A549 (cell line): ENCODE measurements at regions of chr17 and their contacts with region 1.

Region 1: GRCh38 chr17:81484195-81484979 is 28.2 kb downstream of the ACTG1 start:
- DNase-seq: peak; percentile 80 to 88
- ATAC-seq: peak; percentile 51 to 69
- H3K4me3 ChIP-seq: peak overlapping the region; percentile 37
- H3K27ac ChIP-seq: peak overlapping the region; percentile 86 to 89
- H3K4me1 ChIP-seq: peaks cover 39% of the 10 kb centered on the region
- CTCF ChIP-seq: peak; percentile 100
- EP300 ChIP-seq: no peak
- POLR2A ChIP-seq: 0 out of 2 replicates have a peak, but pooled peaks have one; percentile 21
- RAD21 ChIP-seq: peak; percentile 93 to 100

Region 2: DNA sequence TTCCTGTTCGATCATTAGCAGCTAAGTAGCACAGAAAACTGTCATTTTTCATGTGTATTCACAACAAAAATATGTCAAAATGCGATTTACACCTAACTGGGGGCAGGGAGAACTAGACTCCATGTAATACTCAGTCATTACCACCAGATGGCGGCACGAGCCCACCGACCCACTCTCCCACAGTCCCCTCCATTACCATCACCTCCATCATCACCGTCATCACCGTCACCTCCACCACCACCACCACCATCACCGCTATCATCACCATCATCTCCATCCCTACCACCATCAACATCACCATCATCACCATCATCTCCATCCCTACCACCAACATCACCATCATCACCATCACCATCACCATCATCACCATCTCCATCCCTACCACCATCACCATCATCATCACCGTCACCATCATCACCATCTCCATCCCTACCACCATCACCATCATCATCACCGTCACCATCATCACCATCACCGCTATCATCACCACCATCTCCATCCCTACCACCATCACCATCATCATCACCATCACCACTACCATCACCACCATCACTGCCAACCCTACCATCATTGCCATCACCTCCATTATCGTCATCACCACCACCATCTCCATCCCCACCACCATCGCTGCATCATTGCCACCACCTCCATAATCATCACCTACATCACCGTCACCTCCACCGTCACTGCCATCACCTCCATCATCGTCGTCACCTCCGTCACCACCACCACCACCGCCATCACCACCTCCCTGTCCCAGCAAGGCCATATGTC is 230.8 kb before region 1 on chr17:
- CTCF ChIA-PET with region 1: interaction called, 184 read pairs
- POLR2A ChIA-PET with region 1: no interaction called
- DNase-seq: peak; percentile 43 to 62
- ATAC-seq: peak; percentile 12 to 47; a peak in 3 of 6 replicates
- H3K4me3 ChIP-seq: no peak overlapping the region
- H3K27ac ChIP-seq: no peak overlapping the region
- H3K4me1 ChIP-seq: peaks cover 18% of the 10 kb centered on the region
- CTCF ChIP-seq: peak; percentile 92
- EP300 ChIP-seq: no peak
- POLR2A ChIP-seq: no peak
- RAD21 ChIP-seq: peak; percentile 95 to 98

Region 3: GRCh38 chr17:81328978-81329919 is 155.1 kb before region 1 on chr17:
- CTCF ChIA-PET with region 1: interaction called, 30 read pairs
- POLR2A ChIA-PET with region 1: no interaction called
- DNase-seq: peak; percentile 93 to 99
- ATAC-seq: peak; percentile 80 to 90
- H3K4me3 ChIP-seq: peak overlapping the region; percentile 30
- H3K27ac ChIP-seq: peak overlapping the region; percentile 93 to 94
- H3K4me1 ChIP-seq: peaks cover 39% of the 10 kb centered on the region
- CTCF ChIP-seq: no peak
- EP300 ChIP-seq: peak; percentile 19 to 41; a peak in 1 of 5 replicates
- POLR2A ChIP-seq: peak; percentile 25
- RAD21 ChIP-seq: peak; percentile 24 to 40; a peak in 2 of 5 replicates

Region 4: GRCh38 chr17:81365148-81365600 is 119.2 kb before region 1 on chr17:
- CTCF ChIA-PET with region 1: interaction called, 20 read pairs
- POLR2A ChIA-PET with region 1: interaction called, 4 read pairs
- DNase-seq: no peak
- ATAC-seq: peak; percentile 49 to 66; a peak in 4 of 6 replicates
- H3K4me3 ChIP-seq: no peak overlapping the region
- H3K27ac ChIP-seq: 0 out of 6 replicates have a peak overlapping the region, but pooled peaks of 1 of the 2 experiments have one; percentile 1
- H3K4me1 ChIP-seq: peaks cover 14% of the 10 kb centered on the region; the same call in 2 of the 3 replicates
- CTCF ChIP-seq: no peak
- EP300 ChIP-seq: no peak
- POLR2A ChIP-seq: no peak
- RAD21 ChIP-seq: no peak

Region 5: GRCh38 chr17:81394921-81395599 is 89.3 kb before region 1 on chr17 and contains the start of gene BAHCC1:
- CTCF ChIA-PET with region 1: interaction called, 121 read pairs
- POLR2A ChIA-PET with region 1: interaction called, 10 read pairs
- DNase-seq: peak; percentile 99 to 100
- ATAC-seq: peak; percentile 65 to 85
- H3K4me3 ChIP-seq: peak within 1 kb of the TSS; percentile 76
- H3K27ac ChIP-seq: peak within 1 kb of the TSS; percentile 94 to 98
- H3K4me1 ChIP-seq: peaks cover 40% of the 10 kb centered on the region
- CTCF ChIP-seq: no peak
- EP300 ChIP-seq: no peak
- POLR2A ChIP-seq: peak; percentile 79
- RAD21 ChIP-seq: no peak
- polyA plus RNA-seq, gene BAHCC1: 2.1 and 2.6 TPM in 2 replicates

Region 6: GRCh38 chr17:81428948-81429774 is 55.2 kb before region 1 on chr17:
- CTCF ChIA-PET with region 1: interaction called, 20 read pairs
- POLR2A ChIA-PET with region 1: no interaction called
- DNase-seq: peak; percentile 64 to 80
- ATAC-seq: peak; percentile 49 to 77
- H3K4me3 ChIP-seq: no peak overlapping the region
- H3K27ac ChIP-seq: peak overlapping the region; percentile 69 to 84
- H3K4me1 ChIP-seq: peaks cover 51% of the 10 kb centered on the region
- CTCF ChIP-seq: no peak
- EP300 ChIP-seq: peak in 1 of 2 experiments; percentile 22; a peak in 1 of 5 replicates
- POLR2A ChIP-seq: no peak
- RAD21 ChIP-seq: peak in 1 of 2 experiments; percentile 34; a peak in 1 of 5 replicates

Region 7: DNA sequence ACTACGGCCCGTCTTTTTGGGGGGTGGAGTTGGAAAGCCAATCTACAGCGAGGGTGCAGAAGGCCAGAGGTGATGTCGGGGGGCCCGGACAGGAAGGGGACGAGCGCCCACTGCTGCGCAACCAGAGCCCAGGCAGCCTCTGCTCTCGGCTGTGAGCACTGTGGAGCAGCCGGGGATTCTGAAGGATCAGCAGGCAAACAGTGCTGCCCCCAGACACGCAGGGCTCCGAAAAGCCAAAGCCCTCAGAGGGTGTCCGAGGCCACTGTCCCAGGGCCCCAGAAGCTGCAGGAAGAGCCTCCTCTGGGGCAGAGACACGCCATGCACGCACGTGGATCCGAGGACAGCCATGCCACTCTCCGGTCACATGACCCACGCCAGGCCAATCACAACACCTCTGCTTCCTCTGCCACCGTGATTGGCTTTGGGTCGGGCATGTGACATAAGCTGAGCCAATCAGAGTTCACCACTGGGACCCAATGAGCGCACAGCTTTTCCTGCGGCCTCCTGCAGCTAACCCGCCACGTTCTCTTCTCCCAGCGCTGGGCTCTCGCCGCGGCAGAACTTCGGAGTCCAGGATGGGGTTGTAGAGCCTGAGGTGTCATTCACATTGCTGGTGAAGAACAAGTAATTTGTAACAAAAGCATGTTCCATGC is 12.5 kb before region 1 on chr17:
- CTCF ChIA-PET with region 1: interaction called, 53 read pairs
- POLR2A ChIA-PET with region 1: no interaction called
- DNase-seq: peak; percentile 80 to 94
- ATAC-seq: peak in 1 of 2 experiments; percentile 71; a peak in 3 of 6 replicates
- H3K4me3 ChIP-seq: no peak overlapping the region
- H3K27ac ChIP-seq: no peak overlapping the region
- H3K4me1 ChIP-seq: no peaks in the 10 kb centered on the region
- CTCF ChIP-seq: no peak
- EP300 ChIP-seq: no peak
- POLR2A ChIP-seq: no peak
- RAD21 ChIP-seq: no peak

Region 8: DNA sequence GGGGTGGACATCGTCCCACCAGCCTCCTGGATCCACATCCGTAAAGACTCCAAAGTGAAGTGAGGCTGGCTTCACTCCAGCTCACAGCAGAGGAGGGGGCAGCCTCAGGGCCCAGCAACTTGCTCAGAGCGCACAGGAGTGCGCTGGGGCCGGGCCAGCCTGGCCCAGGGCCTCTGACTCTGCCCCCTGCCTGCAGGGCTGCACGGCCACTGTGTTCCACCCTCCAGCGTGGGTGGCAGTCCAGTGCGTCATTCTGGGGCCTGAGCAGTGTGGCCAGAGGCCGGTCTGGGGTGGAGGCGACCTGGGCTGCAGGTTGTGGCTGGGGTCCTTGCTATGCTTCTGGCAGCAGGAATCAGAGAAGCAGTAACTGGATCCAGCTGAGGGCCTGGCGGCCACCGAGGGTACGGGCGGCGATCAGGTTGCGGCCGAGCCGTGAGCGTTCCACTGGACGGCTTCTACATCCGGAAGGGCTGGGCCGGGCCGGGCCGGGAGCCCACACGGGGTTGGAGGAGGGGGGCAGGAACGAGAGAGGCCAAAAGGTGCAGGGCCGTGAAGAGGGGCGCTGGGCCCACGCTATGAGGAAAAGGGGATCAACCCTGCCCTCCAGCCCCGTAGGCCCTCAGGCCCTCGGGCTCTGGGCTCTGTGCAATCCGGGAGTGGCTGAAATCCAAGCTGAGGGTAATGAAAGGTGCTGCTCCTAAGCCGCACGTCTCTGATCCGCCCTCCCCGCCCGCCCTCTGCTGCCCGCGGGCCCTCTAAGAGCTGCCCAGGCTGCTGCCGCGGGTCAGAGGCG is 43.4 kb after region 1 on chr17 and contains the start of gene FSCN2:
- CTCF ChIA-PET with region 1: no interaction called
- POLR2A ChIA-PET with region 1: no interaction called
- DNase-seq: no peak
- ATAC-seq: peak; percentile 21 to 43; a peak in 5 of 6 replicates
- H3K4me3 ChIP-seq: no peak within 1 kb of the TSS
- H3K27ac ChIP-seq: no peak within 1 kb of the TSS
- H3K4me1 ChIP-seq: no peaks in the 10 kb centered on the region
- CTCF ChIP-seq: no peak
- EP300 ChIP-seq: no peak
- POLR2A ChIP-seq: no peak
- RAD21 ChIP-seq: no peak
- polyA plus RNA-seq, gene FSCN2: 0.84 and 1.2 TPM in 2 replicates

Region 9: DNA sequence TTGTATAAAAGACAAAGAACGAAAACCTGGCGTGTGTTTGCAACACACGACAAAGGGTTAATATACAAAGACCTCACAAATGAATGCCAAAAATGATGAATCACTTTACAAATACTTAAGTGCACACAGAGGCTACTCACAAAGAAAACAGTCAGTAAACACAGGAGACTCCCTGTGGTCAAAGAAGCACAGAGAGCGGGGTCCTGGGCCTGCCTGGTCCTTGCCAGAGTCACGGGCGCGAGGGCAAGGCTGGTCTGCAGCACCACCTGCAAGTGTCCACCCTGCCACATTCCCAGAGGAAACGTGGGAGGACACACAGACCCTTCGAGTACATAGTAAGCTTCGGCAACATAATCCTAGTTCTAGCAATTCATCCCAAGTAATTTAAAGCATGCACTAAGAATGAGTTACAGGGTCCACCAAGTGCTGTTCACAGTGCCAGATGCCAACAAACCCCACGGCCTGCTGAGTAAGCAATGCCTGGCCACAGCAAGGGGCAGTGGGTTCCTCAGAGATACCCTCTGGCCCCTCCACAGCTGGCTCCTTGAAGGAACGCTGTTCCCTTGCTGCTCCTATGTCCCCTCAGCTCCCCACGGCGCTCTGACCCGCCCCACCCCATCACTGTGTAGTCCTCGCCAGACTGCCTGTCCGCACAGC is 92.4 kb after region 1 on chr17:
- CTCF ChIA-PET with region 1: no interaction called
- POLR2A ChIA-PET with region 1: no interaction called
- DNase-seq: peak; percentile 89 to 99
- ATAC-seq: peak; percentile 86 to 91
- H3K4me3 ChIP-seq: peak overlapping the region; percentile 21; the same call in 2 of the 3 replicates
- H3K27ac ChIP-seq: peak overlapping the region; percentile 93 to 95
- H3K4me1 ChIP-seq: peaks cover 76% of the 10 kb centered on the region
- CTCF ChIP-seq: 0 out of 3 replicates have a peak, but pooled peaks have one; percentile 13
- EP300 ChIP-seq: peak in 1 of 2 experiments; percentile 67; a peak in 2 of 5 replicates
- POLR2A ChIP-seq: no peak
- RAD21 ChIP-seq: peak; percentile 43 to 57; a peak in 4 of 5 replicates

Region 10: DNA sequence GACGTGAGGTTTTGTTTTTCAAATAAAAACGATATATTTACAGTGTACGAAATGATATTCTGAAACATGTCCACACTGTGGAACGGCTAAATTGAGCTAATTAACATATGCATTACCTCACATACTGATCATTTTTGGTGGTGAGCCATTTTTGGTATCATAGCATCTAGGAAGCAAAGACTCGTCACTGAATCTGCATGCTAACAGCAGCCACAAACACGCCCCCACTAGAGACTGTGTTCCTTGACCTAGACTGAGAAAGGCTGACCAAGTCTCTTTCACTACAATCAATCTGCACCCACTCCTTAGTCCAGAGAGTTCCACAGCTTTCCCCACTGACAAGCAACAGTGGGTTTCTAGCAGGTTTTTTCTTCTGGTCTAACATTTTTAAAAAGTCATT is 123.0 kb after region 1 on chr17:
- CTCF ChIA-PET with region 1: no interaction called
- POLR2A ChIA-PET with region 1: no interaction called
- DNase-seq: no peak
- ATAC-seq: no peak
- H3K4me3 ChIP-seq: no peak overlapping the region
- H3K27ac ChIP-seq: no peak overlapping the region
- H3K4me1 ChIP-seq: no peaks in the 10 kb centered on the region
- CTCF ChIP-seq: no peak
- EP300 ChIP-seq: no peak
- POLR2A ChIP-seq: no peak
- RAD21 ChIP-seq: no peak